Activated CD4-positive, alpha-beta memory T cell treated with anti-CD3 and anti-CD28 coated beads, Interleukin-2, amount 10 ng/mL, durations not matched to agents 7 days and 5 days (primary cell): ENCODE measurements at regions of chr11 and their contacts with region 1.

Region 1: DNA sequence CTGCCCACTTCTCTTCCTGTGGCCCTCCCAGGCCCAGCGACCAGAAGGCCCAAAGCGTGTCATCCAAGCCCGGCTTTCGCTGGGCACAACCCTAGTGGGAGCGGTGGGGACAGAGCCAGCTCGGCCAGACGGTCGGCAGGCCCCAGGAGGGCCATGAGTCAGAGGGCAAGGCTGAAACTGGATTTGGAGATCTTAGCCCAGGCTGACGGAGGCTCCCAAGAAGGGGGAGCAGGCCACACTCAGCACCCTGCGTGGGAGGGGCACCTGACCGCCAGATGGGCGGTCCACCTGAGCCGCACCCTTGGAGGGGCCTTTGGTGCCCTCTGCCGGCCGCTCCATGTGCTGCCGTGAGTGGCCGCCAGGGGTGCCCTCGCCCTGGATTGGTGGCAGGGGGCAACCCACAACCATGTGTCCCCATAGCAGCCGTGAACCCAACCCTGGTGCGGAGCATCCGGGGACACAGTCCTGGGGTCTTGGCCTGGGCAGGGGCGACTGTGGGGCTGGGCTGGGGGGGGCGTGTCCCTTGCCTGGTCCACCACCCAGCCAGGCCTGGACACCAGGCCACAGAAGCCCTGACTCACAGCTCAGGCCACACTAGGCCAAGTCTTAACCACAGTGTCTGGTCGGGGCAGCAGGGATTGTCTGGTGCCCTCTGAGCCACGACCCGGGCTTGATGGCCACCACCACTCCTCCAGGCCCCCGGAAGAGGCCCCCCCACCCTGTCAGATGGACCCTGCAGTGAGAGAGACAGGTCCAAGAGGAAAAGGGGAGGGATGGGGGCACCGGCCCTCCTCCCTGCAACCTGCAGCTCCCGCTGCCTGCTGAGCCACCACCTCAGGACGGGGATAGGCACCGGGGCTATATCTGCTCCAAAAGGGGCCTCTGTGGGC is 19.2 kb upstream of the TALDO1 start:
- DNase-seq: peak; percentile 83
- H3K4me3 Mint-ChIP-seq: no peak overlapping the region
- H3K27ac Mint-ChIP-seq: no peak overlapping the region
- H3K4me1 Mint-ChIP-seq: peaks cover 19% of the 10 kb centered on the region
- H3K27me3 Mint-ChIP-seq: peaks cover 7% of the 10 kb centered on the region

Region 2: DNA sequence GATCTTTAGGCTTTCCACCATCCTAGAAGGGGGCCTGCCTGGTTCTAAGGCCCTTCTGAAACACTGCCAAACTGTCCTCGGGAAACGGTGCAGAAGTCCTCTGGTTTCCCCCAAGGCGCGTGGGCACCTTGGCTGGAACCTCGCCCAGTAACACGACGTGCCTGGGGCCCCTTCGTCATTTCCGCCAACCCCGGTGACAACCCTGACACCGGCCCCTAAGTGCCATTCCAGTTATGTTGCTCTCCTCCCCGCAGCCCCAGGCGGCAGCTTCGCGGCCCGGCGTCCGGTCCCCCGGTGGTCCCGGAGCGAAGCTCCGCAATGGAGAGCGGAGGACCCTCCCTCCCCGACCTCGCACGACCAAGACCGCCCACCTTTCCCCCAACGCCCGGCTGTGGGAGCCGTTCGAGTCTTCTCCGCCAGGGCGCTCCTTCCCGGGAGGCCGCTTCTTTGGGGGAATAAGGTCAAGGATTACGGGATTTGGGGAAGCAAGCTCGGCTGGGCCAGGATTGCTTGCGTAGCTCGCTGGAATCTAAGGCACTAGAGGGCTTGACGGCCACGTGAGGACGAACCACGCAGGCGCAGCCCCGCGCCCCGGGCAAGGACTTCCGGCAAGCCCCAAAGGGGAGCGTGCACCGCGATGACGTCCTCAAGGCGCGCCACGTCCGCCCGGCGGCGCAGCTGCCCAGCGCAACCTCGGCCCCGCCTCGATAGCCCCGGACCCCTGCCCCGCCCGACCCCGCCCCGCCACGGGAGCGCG is 221.7 kb before region 1 on chr11:
- CTCF ChIA-PET with region 1: no interaction called
- POLR2A ChIA-PET with region 1: interaction called, 14 read pairs
- DNase-seq: peak; percentile 97
- H3K4me3 Mint-ChIP-seq: peak overlapping the region; percentile 95
- H3K27ac Mint-ChIP-seq: peak overlapping the region; percentile 99
- H3K4me1 Mint-ChIP-seq: peaks cover 40% of the 10 kb centered on the region
- H3K27me3 Mint-ChIP-seq: no peaks in the 10 kb centered on the region

Region 3: GRCh38 chr11:554824-555472 is 173.2 kb before region 1 on chr11:
- CTCF ChIA-PET with region 1: interaction called, 17 read pairs
- POLR2A ChIA-PET with region 1: interaction called, 5 read pairs
- DNase-seq: peak; percentile 77
- H3K4me3 Mint-ChIP-seq: peak overlapping the region; percentile 39
- H3K27ac Mint-ChIP-seq: no peak overlapping the region
- H3K4me1 Mint-ChIP-seq: peaks cover 7% of the 10 kb centered on the region
- H3K27me3 Mint-ChIP-seq: peaks cover 15% of the 10 kb centered on the region

Region 4: GRCh38 chr11:606257-606656 is 121.8 kb before region 1 on chr11:
- CTCF ChIA-PET with region 1: no interaction called
- POLR2A ChIA-PET with region 1: no interaction called
- DNase-seq: no peak
- H3K4me3 Mint-ChIP-seq: no peak overlapping the region
- H3K27ac Mint-ChIP-seq: no peak overlapping the region
- H3K4me1 Mint-ChIP-seq: no peaks in the 10 kb centered on the region
- H3K27me3 Mint-ChIP-seq: no peaks in the 10 kb centered on the region

Region 5: DNA sequence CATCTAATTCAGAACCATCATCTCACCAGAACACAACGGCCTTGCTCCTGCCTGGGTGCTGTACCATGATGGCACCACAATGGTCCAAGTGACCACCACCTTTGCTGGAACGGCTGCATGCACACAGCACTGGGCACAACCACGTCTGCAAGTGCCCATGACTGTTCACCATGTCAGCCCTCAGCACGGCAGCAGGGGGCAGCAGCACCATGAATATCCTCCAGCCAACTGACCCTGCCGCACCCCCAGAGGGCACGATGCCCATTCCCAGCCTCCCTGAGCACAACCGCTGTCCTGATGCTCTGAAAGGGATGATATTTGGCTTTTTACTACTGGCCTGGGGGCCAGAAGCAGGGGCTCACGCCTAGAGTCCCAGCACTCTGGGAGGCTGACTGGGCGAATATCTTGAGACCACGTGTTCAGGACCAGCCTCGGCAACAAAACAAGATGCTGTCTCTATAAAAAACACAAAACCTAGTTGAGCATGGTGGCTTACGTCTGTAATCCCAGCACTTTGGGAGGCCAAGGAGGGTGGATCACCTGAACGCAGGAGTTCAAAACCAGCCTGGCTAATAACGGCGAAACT is 65.3 kb before region 1 on chr11:
- CTCF ChIA-PET with region 1: interaction called, 12 read pairs
- POLR2A ChIA-PET with region 1: no interaction called
- DNase-seq: peak; percentile 45
- H3K4me3 Mint-ChIP-seq: no peak overlapping the region
- H3K27ac Mint-ChIP-seq: no peak overlapping the region
- H3K4me1 Mint-ChIP-seq: no peaks in the 10 kb centered on the region
- H3K27me3 Mint-ChIP-seq: no peaks in the 10 kb centered on the region

Region 6: GRCh38 chr11:695538-696248 is 32.4 kb before region 1 on chr11 and contains the start of gene TMEM80:
- CTCF ChIA-PET with region 1: interaction called, 34 read pairs
- POLR2A ChIA-PET with region 1: interaction called, 28 read pairs
- DNase-seq: peak; percentile 99
- H3K4me3 Mint-ChIP-seq: peak within 1 kb of the TSS; percentile 89
- H3K27ac Mint-ChIP-seq: peak within 1 kb of the TSS; percentile 91
- H3K4me1 Mint-ChIP-seq: peaks cover 52% of the 10 kb centered on the region
- H3K27me3 Mint-ChIP-seq: no peaks in the 10 kb centered on the region
- total RNA-seq, gene TMEM80: 22.6 to 25.3 TPM

Region 7: GRCh38 chr11:747158-748006 is 19.3 kb after region 1 on chr11 and contains the start of gene TALDO1:
- CTCF ChIA-PET with region 1: interaction called, 22 read pairs
- POLR2A ChIA-PET with region 1: interaction called, 6 read pairs
- DNase-seq: peak; percentile 89
- H3K4me3 Mint-ChIP-seq: peak within 1 kb of the TSS; percentile 82
- H3K27ac Mint-ChIP-seq: peak within 1 kb of the TSS; percentile 77
- H3K4me1 Mint-ChIP-seq: peaks cover 25% of the 10 kb centered on the region
- H3K27me3 Mint-ChIP-seq: no peaks in the 10 kb centered on the region
- total RNA-seq, gene TALDO1: 215 to 224 TPM